Activated T-helper 2 cell treated with anti-CD3 and anti-CD28 coated beads, Interferon-gamma antibody, Interleukin-2, Interleukin-4, amounts not matched to agents 10 μg/mL and 5 μg/mL and 100 μg/mL, durations not matched to agents 14 hours and 24 hours and 36 hours (primary cell): ENCODE measurements at regions of chr1 and their contacts with region 1.

Region 1: GRCh38 chr1:10941891-10942541 is 70.4 kb upstream of the TARDBP start:
- DNase-seq: peak; percentile 40
- H3K4me3 Mint-ChIP-seq: no peak overlapping the region
- H3K27ac Mint-ChIP-seq: no peak overlapping the region
- H3K4me1 Mint-ChIP-seq: peaks cover 27% of the 10 kb centered on the region
- H3K27me3 Mint-ChIP-seq: peaks cover 62% of the 10 kb centered on the region

Region 2: GRCh38 chr1:10867138-10867721 is 74.8 kb before region 1 on chr1:
- intact Hi-C with region 1: loop called (anchors 5 kb)
- DNase-seq: peak; percentile 50
- H3K4me3 Mint-ChIP-seq: peak overlapping the region; percentile 52
- H3K27ac Mint-ChIP-seq: no peak overlapping the region
- H3K4me1 Mint-ChIP-seq: peaks cover 15% of the 10 kb centered on the region
- H3K27me3 Mint-ChIP-seq: peaks cover 69% of the 10 kb centered on the region